ENCODE measurements at regions of chr1 and their contacts with region 1.

Region 1: DNA sequence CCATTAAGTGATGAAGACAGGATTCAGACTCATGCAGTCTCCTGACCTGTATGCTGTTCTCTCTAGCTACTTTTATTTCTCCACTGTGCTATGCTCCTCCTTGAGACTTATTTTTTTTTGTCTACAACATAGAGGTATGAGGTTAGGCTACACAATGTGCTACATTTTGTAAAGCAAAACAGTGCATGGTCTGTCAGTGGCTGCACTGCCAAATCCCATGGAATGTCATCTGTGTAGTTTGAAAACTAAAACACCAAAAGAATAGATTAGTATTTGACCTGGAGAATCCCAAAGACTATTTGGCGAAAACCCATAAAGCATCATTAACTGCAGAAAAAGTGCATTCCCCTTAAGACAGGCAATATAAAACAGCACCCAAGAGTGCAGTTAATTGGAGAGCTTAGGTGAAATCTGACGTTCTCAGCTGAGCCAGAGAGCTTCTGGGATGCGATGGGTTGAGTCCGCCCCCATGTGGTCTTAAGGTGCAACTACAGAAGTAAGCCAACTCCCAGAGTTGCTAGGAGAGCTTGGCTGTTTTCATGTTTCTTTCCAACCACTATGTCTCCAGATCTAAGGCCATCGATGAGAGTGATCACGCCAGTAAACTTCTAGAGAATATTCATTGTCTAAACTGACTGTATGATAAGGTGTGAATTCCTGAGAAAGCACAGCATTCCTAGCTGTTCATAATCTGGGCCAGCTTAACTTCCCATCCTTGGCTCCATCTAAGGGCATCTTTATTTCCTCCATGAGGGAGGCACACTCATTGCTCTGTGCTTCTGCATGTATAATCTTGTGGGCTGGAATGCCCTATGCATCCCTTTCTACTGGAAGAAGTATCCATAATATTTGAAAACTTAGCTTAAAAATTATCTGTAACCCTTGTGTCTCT is 20.7 kb upstream of the CYP2J2 start:
- DNase-seq: no peak

Region 2: GRCh38 chr1:59892841-59893811 is 54.2 kb before region 1 on chr1:
- intact Hi-C with region 1: loop called in 1 of 2 experiments (anchors 5 kb)
- DNase-seq: no peak

Region 3: GRCh38 chr1:60108196-60108595 is 160.9 kb after region 1 on chr1:
- intact Hi-C with region 1: no loop called
- DNase-seq: no peak